ENCODE measurements at regions of chr1 and their contacts with region 1.

Region 1: GRCh38 chr1:9004700-9005394 is 21.4 kb downstream of the SLC2A7 start:
- DNase-seq: peak; percentile 92
- ATAC-seq: peak; percentile 87
- H3K4me3 Mint-ChIP-seq: peak overlapping the region; percentile 70
- H3K27ac Mint-ChIP-seq: peak overlapping the region; percentile 73
- H3K4me1 Mint-ChIP-seq: peaks cover 22% of the 10 kb centered on the region
- H3K27me3 Mint-ChIP-seq: peaks cover 9% of the 10 kb centered on the region

Region 2: GRCh38 chr1:8873506-8874229 is 131.2 kb before region 1 on chr1:
- CTCF ChIA-PET with region 1: interaction called, 41 read pairs
- POLR2A ChIA-PET with region 1: interaction called, 8 read pairs
- DNase-seq: peak; percentile 77
- ATAC-seq: peak; percentile 18
- H3K4me3 Mint-ChIP-seq: peak overlapping the region; percentile 97
- H3K27ac Mint-ChIP-seq: peak overlapping the region; percentile 71
- H3K4me1 Mint-ChIP-seq: peaks cover 65% of the 10 kb centered on the region
- H3K27me3 Mint-ChIP-seq: no peaks in the 10 kb centered on the region

Region 3: GRCh38 chr1:8903908-8904650 is 100.8 kb before region 1 on chr1:
- CTCF ChIA-PET with region 1: interaction called, 33 read pairs
- POLR2A ChIA-PET with region 1: no interaction called
- DNase-seq: no peak
- ATAC-seq: no peak
- H3K4me3 Mint-ChIP-seq: no peak overlapping the region
- H3K27ac Mint-ChIP-seq: peak overlapping the region; percentile 4
- H3K4me1 Mint-ChIP-seq: peaks cover 63% of the 10 kb centered on the region
- H3K27me3 Mint-ChIP-seq: no peaks in the 10 kb centered on the region

Region 4: DNA sequence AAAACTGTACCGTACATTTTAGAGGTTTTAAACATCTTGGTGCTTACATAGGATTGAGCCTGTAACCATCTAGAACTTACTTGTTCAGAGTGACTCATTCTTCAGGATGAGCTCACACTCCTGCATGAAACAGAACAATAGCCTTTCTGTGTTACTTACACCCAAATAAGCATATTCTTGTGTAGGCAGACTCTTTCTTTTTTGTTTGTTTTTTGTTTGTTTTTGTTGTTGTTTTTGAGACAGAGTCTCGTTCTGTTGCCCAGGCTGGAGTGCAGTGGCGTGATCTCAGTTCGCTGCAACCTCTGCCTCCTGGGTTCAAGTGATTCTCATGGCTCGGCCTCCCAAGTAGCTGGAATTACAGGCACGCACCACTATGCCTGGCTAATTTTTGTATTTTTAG is 62.9 kb before region 1 on chr1:
- CTCF ChIA-PET with region 1: interaction called, 30 read pairs
- POLR2A ChIA-PET with region 1: no interaction called
- DNase-seq: no peak
- ATAC-seq: no peak
- H3K4me3 Mint-ChIP-seq: no peak overlapping the region
- H3K27ac Mint-ChIP-seq: peak overlapping the region; percentile 61
- H3K4me1 Mint-ChIP-seq: peaks cover 94% of the 10 kb centered on the region
- H3K27me3 Mint-ChIP-seq: no peaks in the 10 kb centered on the region

Region 5: DNA sequence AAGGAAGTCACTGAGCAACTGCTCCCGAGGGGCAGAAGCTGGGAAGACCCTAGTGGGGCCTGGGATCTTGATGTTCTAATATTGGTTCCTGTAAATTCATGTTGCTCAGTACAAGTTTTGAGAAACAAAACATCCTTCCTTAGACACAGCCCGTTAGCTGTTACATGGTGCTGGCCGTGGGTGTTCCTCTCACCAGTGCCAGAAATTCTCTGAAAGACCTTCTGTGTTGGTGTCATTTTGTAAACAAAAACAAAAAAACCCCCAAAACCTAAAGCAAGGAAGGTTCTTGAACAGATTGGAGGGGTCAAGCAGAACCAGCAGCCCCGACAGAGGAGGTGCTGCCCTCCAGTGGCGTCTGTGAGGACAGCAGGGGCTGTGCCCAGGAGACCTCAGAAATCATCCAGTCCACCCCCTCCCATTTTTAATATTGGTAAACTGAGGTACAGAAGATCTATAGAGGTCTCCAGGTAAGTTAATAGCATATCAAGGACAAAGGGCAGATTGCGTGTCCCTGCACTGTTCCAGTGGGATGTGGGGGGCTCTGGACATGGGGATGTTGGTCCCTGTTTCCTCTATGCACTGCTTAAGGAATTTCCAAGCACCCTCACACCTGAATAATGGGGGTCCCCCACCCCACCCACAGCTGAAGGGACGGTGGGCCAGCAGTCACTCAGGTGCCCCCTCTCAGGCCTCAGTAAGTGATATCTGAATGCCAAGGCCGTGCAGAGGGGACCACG is 16.8 kb before region 1 on chr1:
- CTCF ChIA-PET with region 1: interaction called, 156 read pairs
- POLR2A ChIA-PET with region 1: interaction called, 9 read pairs
- DNase-seq: peak; percentile 76
- ATAC-seq: peak; percentile 62
- H3K4me3 Mint-ChIP-seq: peak overlapping the region; percentile 48
- H3K27ac Mint-ChIP-seq: peak overlapping the region; percentile 94
- H3K4me1 Mint-ChIP-seq: peaks cover 62% of the 10 kb centered on the region
- H3K27me3 Mint-ChIP-seq: no peaks in the 10 kb centered on the region

Region 6: GRCh38 chr1:9028921-9029705 is 24.3 kb after region 1 on chr1:
- CTCF ChIA-PET with region 1: no interaction called
- POLR2A ChIA-PET with region 1: no interaction called
- DNase-seq: no peak
- ATAC-seq: no peak
- H3K4me3 Mint-ChIP-seq: no peak overlapping the region
- H3K27ac Mint-ChIP-seq: no peak overlapping the region
- H3K4me1 Mint-ChIP-seq: no peaks in the 10 kb centered on the region
- H3K27me3 Mint-ChIP-seq: peaks cover 5% of the 10 kb centered on the region